ENCODE measurements at regions of chr14 and their contacts with region 1.

Region 1: GRCh38 chr14:41294095-41294494 is 312.6 kb upstream of the LRFN5 start:
- DNase-seq: no peak
- ATAC-seq: no peak
- H3K4me3 ChIP-seq: no peak overlapping the region
- H3K27ac ChIP-seq: no peak overlapping the region
- H3K4me1 ChIP-seq: 0 out of 2 replicates have a peak, but pooled peaks cover 5% of the 10 kb centered on the region
- H3K27me3 ChIP-seq: no peaks in the 10 kb centered on the region
- CTCF ChIP-seq: no peak

Region 2: GRCh38 chr14:41235466-41235865 is 58.6 kb before region 1 on chr14:
- CTCF ChIA-PET with region 1: no interaction called
- POLR2A ChIA-PET with region 1: no interaction called
- intact Hi-C with region 1: no loop called
- DNase-seq: no peak
- ATAC-seq: no peak
- H3K4me3 ChIP-seq: no peak overlapping the region
- H3K27ac ChIP-seq: no peak overlapping the region
- H3K4me1 ChIP-seq: no peaks in the 10 kb centered on the region
- H3K27me3 ChIP-seq: no peaks in the 10 kb centered on the region
- CTCF ChIP-seq: no peak

Region 3: GRCh38 chr14:41343857-41344256 is 49.8 kb after region 1 on chr14:
- CTCF ChIA-PET with region 1: no interaction called
- POLR2A ChIA-PET with region 1: no interaction called
- intact Hi-C with region 1: loop called (anchors 5 kb)
- DNase-seq: no peak
- ATAC-seq: no peak
- H3K4me3 ChIP-seq: no peak overlapping the region
- H3K27ac ChIP-seq: no peak overlapping the region
- H3K4me1 ChIP-seq: no peaks in the 10 kb centered on the region
- H3K27me3 ChIP-seq: no peaks in the 10 kb centered on the region
- CTCF ChIP-seq: no peak

Region 4: DNA sequence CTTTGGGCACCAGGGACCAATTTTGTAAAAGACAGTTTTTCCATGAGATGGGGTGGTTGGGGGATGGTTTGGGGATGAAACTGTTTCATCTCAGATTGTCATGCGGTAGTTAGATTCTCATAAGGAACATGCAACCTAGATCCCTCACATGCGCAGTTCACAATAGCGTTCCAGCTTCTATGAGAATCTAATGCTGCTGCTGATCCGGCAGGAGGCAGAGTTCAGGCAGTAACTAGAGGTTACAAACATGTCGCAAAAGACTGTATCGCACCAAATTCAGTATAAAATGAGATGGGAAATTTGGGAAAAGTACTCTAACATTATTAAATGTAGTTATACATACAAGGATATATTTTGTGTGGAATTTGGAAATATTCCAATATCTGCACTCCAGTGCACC is 99.4 kb after region 1 on chr14:
- CTCF ChIA-PET with region 1: no interaction called
- POLR2A ChIA-PET with region 1: no interaction called
- intact Hi-C with region 1: no loop called
- DNase-seq: peak; percentile 13
- ATAC-seq: no peak
- H3K4me3 ChIP-seq: no peak overlapping the region
- H3K27ac ChIP-seq: no peak overlapping the region
- H3K4me1 ChIP-seq: no peaks in the 10 kb centered on the region
- H3K27me3 ChIP-seq: no peaks in the 10 kb centered on the region
- CTCF ChIP-seq: peak; percentile 39; the same call in 1 of the 2 replicates